K562 (cell line): ENCODE measurements at regions of chr14 and their contacts with region 1.

Region 1: DNA sequence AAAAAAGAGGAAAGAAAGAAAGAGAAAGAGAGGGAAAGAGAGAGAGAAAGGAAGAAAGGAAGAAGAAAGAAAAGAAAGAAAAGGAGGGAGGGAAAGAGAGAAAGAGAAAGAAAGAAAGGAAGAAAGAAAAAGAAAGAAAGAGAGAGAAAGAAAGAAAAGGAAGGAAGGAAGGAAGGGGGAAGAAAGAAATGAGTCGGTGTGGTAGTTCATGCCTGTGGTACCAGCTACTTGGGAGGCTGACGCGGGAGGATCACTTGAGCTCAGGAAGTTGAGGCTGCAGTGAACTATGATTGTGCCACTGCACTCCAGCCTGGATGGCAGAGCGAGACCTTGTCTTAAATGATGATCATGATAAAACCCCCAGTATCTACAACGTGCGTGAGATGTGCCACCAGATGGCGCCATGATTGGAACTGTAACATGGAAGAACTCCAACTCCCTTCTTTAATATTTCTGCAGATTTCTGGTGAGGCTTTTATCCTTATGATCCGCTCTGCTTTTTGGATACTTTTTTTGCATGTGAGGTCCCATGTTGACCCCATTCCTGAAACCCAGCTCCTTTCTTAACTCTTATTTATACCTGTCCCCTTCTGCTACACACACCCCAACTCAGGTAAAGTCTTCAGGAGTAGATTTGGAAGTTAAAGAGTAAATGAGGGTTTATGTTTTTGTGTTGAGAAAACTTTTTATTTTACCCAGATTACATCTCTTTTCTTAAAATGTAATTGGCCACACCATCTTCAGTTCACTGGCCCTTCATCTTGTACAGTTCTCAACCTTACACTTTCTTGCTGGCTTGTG is 25.6 kb downstream of the RNASE10 start:
- DNase-seq: peak; percentile 13 to 75 (median 26)
- ATAC-seq: peak; percentile 82
- H3K4me3 ChIP-seq: no peak overlapping the region
- H3K27ac ChIP-seq: no peak overlapping the region
- H3K4me1 ChIP-seq: no peaks in the 10 kb centered on the region; a peak in 2 of 5 replicates
- H3K27me3 ChIP-seq: no peaks in the 10 kb centered on the region
- CTCF ChIP-seq: peak; percentile 50 to 66 (median 59); a peak in 5 of 6 replicates
- EP300 ChIP-seq: no peak
- POLR2A ChIP-seq: no peak
- RAD21 ChIP-seq: peak; percentile 60 to 72

Region 2: DNA sequence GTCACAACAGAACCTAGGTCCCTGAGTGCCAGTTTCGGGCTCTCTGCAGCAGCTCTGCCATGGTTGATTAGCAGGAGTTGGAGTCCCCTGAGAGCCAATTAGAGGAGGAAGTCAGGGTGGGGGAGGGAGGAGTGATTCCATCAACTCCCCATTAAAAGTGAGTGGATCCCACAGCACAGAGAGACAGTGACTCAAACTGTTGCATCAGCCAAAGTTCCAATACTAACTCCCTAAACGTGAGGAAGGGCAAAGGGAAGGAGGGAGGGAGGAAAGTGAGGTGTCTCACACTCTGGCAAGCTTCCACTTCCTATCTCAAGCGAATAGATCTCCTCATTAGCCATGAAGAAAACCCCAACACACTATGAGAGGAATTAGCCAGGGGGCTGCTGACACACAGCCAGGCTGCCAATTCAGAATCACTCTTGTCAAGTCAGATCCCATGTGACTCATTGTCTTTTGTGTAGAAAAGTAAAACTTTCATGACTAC is 268.3 kb before region 1 on chr14:
- CTCF ChIA-PET with region 1: no interaction called
- POLR2A ChIA-PET with region 1: no interaction called
- in situ Hi-C with region 1: no loop called
- intact Hi-C with region 1: no loop called
- DNase-seq: peak in 3 of 4 experiments; percentile 6 to 40 (median 15)
- ATAC-seq: peak; percentile 73
- H3K4me3 ChIP-seq: no peak overlapping the region
- H3K27ac ChIP-seq: peak overlapping the region; percentile 62; the same call in 1 of the 3 replicates
- H3K4me1 ChIP-seq: peaks cover 0 to 16% of the 10 kb centered on the region in 2 experiments; a peak in 3 of 5 replicates
- H3K27me3 ChIP-seq: no peaks in the 10 kb centered on the region
- CTCF ChIP-seq: no peak
- EP300 ChIP-seq: peak; percentile 57
- POLR2A ChIP-seq: no peak
- RAD21 ChIP-seq: peak in 1 of 2 experiments; percentile 27; a peak in 2 of 4 replicates

Region 3: DNA sequence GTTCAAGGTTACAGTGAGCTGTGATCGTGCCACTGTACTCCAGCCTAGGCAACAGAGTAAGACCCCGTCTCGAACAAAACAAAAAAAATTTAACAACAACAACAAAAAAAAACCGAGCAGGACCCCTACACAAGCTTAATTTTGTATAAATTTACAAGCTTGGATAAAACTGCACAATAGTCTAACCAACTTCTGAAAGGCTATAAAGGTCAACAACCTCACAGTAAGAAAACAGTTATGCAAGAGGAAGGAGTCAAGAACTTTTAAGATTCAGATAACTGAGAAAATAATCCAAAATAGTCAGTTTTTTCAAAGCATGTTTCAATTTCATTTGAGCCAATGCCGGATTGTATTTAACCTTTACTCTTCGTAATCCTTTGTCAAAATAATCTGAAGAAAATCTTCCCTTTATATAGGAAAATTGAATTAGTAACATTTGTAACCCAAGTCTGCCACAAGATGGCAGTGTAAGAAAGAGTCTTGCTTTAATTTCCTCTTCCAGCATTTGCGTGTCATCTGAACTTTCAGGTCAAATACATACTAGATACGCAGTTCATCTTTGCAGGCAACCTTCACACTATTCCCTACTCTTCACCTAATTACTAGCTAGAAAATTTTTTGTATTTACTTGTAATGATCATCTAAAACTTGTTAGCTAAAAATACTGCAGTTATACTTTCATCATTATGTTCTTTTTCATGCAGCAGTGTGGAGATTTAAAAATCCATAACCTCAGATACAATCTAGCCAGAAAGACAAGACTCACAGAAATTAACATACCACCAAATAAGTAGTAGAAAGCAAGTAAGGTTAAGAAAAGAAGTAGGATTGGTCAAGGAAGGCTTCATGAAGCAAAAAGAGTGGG is 203.7 kb before region 1 on chr14:
- CTCF ChIA-PET with region 1: no interaction called
- POLR2A ChIA-PET with region 1: no interaction called
- in situ Hi-C with region 1: no loop called
- intact Hi-C with region 1: no loop called
- DNase-seq: peak in 2 of 4 experiments; percentile 27 to 72
- ATAC-seq: peak; percentile 34; the same call in 2 of the 3 replicates
- H3K4me3 ChIP-seq: no peak overlapping the region
- H3K27ac ChIP-seq: no peak overlapping the region
- H3K4me1 ChIP-seq: peaks cover 0 to 14% of the 10 kb centered on the region in 2 experiments; a peak in 2 of 5 replicates
- H3K27me3 ChIP-seq: no peaks in the 10 kb centered on the region
- CTCF ChIP-seq: peak; percentile 40 to 75 (median 47); a peak in 4 of 6 replicates
- EP300 ChIP-seq: no peak
- POLR2A ChIP-seq: no peak
- RAD21 ChIP-seq: peak; percentile 64 to 74

Region 4: GRCh38 chr14:20564501-20564997 is 33.6 kb after region 1 on chr14:
- CTCF ChIA-PET with region 1: no interaction called
- POLR2A ChIA-PET with region 1: no interaction called
- in situ Hi-C with region 1: no loop called
- intact Hi-C with region 1: no loop called
- DNase-seq: no peak
- ATAC-seq: no peak
- H3K4me3 ChIP-seq: no peak overlapping the region
- H3K27ac ChIP-seq: no peak overlapping the region
- H3K4me1 ChIP-seq: peaks cover 0 to 12% of the 10 kb centered on the region in 2 experiments; a peak in 1 of 5 replicates
- H3K27me3 ChIP-seq: no peaks in the 10 kb centered on the region
- CTCF ChIP-seq: no peak
- EP300 ChIP-seq: no peak
- POLR2A ChIP-seq: no peak
- RAD21 ChIP-seq: no peak

Region 5: GRCh38 chr14:20606190-20606901 is 75.4 kb after region 1 on chr14:
- CTCF ChIA-PET with region 1: interaction called, 14 read pairs
- POLR2A ChIA-PET with region 1: interaction called, 3 read pairs
- in situ Hi-C with region 1: no loop called
- intact Hi-C with region 1: loop called (anchors 1 kb)
- DNase-seq: peak in 2 of 4 experiments; percentile 44 to 66
- ATAC-seq: peak; percentile 69
- H3K4me3 ChIP-seq: no peak overlapping the region
- H3K27ac ChIP-seq: no peak overlapping the region
- H3K4me1 ChIP-seq: peaks cover 0 to 6% of the 10 kb centered on the region in 2 experiments; a peak in 3 of 5 replicates
- H3K27me3 ChIP-seq: no peaks in the 10 kb centered on the region
- CTCF ChIP-seq: peak; percentile 64 to 72 (median 71)
- EP300 ChIP-seq: no peak
- POLR2A ChIP-seq: no peak
- RAD21 ChIP-seq: peak; percentile 78 to 91